ENCODE measurements at regions of chr2 and their contacts with region 1.

Region 1: DNA sequence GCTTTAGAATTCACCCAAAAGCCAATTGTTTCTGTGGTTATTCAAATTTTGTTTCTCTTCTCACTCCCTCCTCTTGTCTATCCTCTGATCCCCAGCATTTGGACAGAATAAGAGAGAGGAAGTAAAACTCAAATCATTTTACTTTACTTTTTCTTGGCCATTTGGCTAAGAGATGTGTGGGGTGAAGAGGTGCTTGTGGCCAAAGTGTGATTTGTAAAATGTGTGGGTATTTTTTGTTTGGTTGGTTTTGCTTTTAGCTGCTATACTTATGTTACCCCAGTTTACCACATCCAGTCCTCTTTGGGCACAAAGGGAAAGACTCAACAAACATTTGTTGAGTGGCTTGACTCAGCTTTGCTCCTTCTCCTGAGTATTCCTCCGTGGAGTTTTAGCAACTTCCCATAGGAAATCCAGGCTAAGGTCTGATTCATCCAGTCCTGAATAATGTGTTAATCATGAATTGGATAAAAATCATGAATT is 109.1 kb upstream of the CYP1B1 start:
- DNase-seq: no peak
- H3K4me3 ChIP-seq: no peak overlapping the region
- H3K27ac ChIP-seq: peak overlapping the region; percentile 3 to 56
- H3K4me1 ChIP-seq: peaks cover 0 to 12% of the 10 kb centered on the region in 2 donors
- H3K27me3 ChIP-seq: no peaks in the 10 kb centered on the region
- CTCF ChIP-seq: no peak

Region 2: GRCh38 chr2:38146275-38146906 is 38.7 kb before region 1 on chr2:
- intact Hi-C with region 1: loop called (anchors 5 kb)
- DNase-seq: peak; percentile 20 to 72
- H3K4me3 ChIP-seq: peak overlapping the region in 1 of 2 donors; percentile 39
- H3K27ac ChIP-seq: peak overlapping the region; percentile 84 to 89
- H3K4me1 ChIP-seq: peaks cover 7 to 17% of the 10 kb centered on the region in 2 donors
- H3K27me3 ChIP-seq: no peaks in the 10 kb centered on the region
- CTCF ChIP-seq: no peak

Measured in ascending aorta (tissue), 2 donors.